Heart right ventricle (tissue), 16 donors: ENCODE measurements at regions of chr16 and their contacts with region 1.

Region 1: DNA sequence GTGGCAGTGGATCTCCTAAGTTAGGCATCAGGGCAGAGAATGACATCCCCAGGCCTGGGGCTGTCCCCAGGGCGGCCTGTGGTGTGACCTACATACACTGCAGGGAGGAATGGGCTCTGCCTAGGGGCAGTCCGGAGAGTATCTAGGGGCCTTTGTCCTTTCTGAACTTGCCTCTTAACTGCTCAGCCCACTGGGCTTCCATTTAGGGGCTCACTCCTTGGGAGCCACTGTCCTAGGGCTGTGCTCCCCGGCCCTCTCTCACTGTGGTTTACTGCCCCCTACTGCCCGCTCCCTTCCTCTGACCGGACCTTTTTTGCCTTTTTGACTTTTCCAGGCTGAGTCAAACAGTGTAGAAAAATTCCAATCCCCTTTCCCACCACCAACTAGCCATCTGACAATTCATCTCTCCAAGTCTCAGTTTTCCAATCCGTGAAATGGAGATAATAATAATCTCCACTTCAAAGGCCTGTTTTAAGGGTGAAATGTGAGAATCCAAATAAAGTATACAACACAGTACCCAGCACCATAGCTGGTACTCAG is 66.8 kb downstream of the DNAH3 start:
- DNase-seq: peak; percentile 69
- ATAC-seq: peak; percentile 88 to 96 (median 92)
- H3K4me3 ChIP-seq: no peak overlapping the region
- H3K27ac ChIP-seq: no peak overlapping the region
- H3K4me1 ChIP-seq: peaks cover 0 to 2% (median 0%) of the 10 kb centered on the region in 9 donors
- H3K27me3 ChIP-seq: no peaks in the 10 kb centered on the region
- CTCF ChIP-seq: peak; percentile 66 to 87 (median 80)

Region 2: GRCh38 chr16:20799599-20799998 is 284.2 kb before region 1 on chr16:
- intact Hi-C with region 1: loop called in 5 of 10 experiments (anchors 2 to 10 kb)
- DNase-seq: no peak
- ATAC-seq: peak in 1 of 8 donors; percentile 53
- H3K4me3 ChIP-seq: no peak overlapping the region
- H3K27ac ChIP-seq: no peak overlapping the region
- H3K4me1 ChIP-seq: peaks cover 0 to 10% (median 0%) of the 10 kb centered on the region in 9 donors
- H3K27me3 ChIP-seq: no peaks in the 10 kb centered on the region
- CTCF ChIP-seq: peak in 8 of 9 donors; percentile 35 to 73 (median 54)

Region 3: GRCh38 chr16:20928774-20929411 is 154.9 kb before region 1 on chr16:
- intact Hi-C with region 1: loop called in 3 of 10 experiments (anchors 10 kb)
- DNase-seq: no peak
- ATAC-seq: peak in 5 of 8 donors; percentile 8 to 43 (median 41)
- H3K4me3 ChIP-seq: no peak overlapping the region
- H3K27ac ChIP-seq: peak overlapping the region in 6 of 10 donors; percentile 2 to 84 (median 74)
- H3K4me1 ChIP-seq: peaks cover 0 to 23% (median 7%) of the 10 kb centered on the region in 9 donors
- H3K27me3 ChIP-seq: no peaks in the 10 kb centered on the region
- CTCF ChIP-seq: no peak